Activated naive CD4-positive, alpha-beta T cell treated with anti-CD3 and anti-CD28 coated beads for 36 hours (primary cell): ENCODE measurements at regions of chr6 and their contacts with region 1.

Region 1: GRCh38 chr6:70520575-70520974 is 46.2 kb upstream of the SDHAF4 start:
- DNase-seq: peak; percentile 24
- H3K4me3 Mint-ChIP-seq: no peak overlapping the region
- H3K27ac Mint-ChIP-seq: no peak overlapping the region
- H3K4me1 Mint-ChIP-seq: peaks cover 7% of the 10 kb centered on the region
- H3K27me3 Mint-ChIP-seq: no peaks in the 10 kb centered on the region

Region 2: DNA sequence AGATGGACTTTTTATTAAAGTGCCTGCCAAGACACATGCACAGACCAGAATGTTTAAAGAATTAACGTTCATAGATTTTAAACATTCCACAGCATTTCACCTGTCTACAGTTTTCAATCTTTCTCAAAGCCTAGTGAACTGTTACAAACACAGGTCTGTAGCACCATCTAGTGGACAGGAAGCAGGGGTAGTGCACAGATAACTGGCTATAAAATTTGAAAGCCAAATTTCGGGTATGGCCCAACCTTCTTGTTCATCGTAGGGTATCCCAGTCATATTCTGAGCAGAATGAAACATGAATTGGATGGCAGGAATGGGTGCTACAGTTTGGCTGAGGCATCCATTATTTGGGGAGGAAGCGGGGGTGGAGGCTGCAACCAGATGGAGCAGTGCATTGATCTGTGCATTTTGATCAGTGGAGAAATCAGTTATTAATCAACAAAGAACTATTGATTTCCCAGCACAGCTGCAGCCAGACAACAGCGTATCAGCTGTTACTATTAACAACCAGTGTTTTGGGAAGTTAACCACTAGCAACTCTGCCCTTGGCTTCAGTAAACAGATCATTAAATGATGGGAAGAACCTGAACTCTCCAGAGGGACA is 492.4 kb after region 1 on chr6:
- CTCF ChIA-PET with region 1: interaction called, 5 read pairs
- intact Hi-C with region 1: loop called (anchors 2 kb)
- DNase-seq: peak; percentile 17
- H3K4me3 Mint-ChIP-seq: no peak overlapping the region
- H3K27ac Mint-ChIP-seq: no peak overlapping the region
- H3K4me1 Mint-ChIP-seq: no peaks in the 10 kb centered on the region
- H3K27me3 Mint-ChIP-seq: peaks cover 11% of the 10 kb centered on the region

Region 3: DNA sequence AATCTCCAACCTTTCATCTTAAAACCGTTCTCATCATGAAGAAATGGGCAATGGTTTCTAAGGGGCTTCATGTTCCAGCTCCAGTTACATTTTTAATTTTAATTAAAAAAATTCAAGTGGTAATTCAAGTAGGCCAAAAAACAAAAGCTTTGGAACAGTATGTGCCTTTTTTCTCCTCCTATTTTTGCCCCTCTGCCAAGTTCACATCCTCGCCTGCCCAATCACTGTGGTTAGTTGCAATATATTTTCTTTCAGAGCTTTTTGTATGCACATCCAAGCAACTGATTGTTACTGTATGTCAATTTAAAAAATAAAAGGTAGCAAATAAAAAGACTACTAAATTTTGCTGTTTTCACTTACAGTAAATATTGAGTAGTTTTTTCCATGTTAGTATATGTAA is 536.1 kb after region 1 on chr6:
- CTCF ChIA-PET with region 1: no interaction called
- intact Hi-C with region 1: no loop called
- DNase-seq: no peak
- H3K4me3 Mint-ChIP-seq: no peak overlapping the region
- H3K27ac Mint-ChIP-seq: no peak overlapping the region
- H3K4me1 Mint-ChIP-seq: no peaks in the 10 kb centered on the region
- H3K27me3 Mint-ChIP-seq: no peaks in the 10 kb centered on the region